Prostate gland (tissue), 2 donors: ENCODE measurements at regions of chr3 and their contacts with region 1.

Region 1: GRCh38 chr3:47522082-47522987 is 8.8 kb upstream of the ELP6 start:
- DNase-seq: peak; percentile 80
- H3K4me3 ChIP-seq: no peak overlapping the region
- H3K27ac ChIP-seq: no peak overlapping the region
- H3K4me1 ChIP-seq: no peaks in the 10 kb centered on the region
- H3K27me3 ChIP-seq: no peaks in the 10 kb centered on the region
- CTCF ChIP-seq: peak; percentile 81 to 97 (median 95)
- POLR2A ChIP-seq: no peak

Region 2: GRCh38 chr3:47057212-47057671 is 465.1 kb before region 1 on chr3:
- intact Hi-C with region 1: no loop called
- DNase-seq: no peak
- H3K4me3 ChIP-seq: no peak overlapping the region
- H3K27ac ChIP-seq: no peak overlapping the region
- H3K4me1 ChIP-seq: no peaks in the 10 kb centered on the region
- H3K27me3 ChIP-seq: no peaks in the 10 kb centered on the region
- CTCF ChIP-seq: no peak
- POLR2A ChIP-seq: no peak

Region 3: DNA sequence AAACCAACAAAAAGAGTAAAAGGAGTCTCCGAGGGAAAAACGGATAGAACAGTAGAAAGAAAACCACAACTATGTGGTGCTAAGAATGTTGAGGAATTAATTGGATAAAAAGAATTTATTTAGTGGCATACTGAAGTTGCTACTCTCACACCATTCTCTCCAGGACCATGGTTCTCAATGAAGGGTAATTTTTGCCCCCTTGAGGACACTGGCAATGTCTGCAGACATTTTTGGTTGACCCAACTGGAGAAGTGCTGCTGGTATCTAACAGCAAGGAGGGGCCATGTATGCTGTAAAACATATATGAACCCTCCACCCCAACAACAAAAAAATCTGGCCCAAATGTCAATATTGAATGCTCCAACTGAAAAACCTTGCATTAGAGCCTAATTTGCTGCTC is 142.2 kb after region 1 on chr3:
- intact Hi-C with region 1: loop called (anchors 10 kb)
- DNase-seq: no peak
- H3K4me3 ChIP-seq: no peak overlapping the region
- H3K27ac ChIP-seq: no peak overlapping the region
- H3K4me1 ChIP-seq: no peaks in the 10 kb centered on the region
- H3K27me3 ChIP-seq: no peaks in the 10 kb centered on the region
- CTCF ChIP-seq: no peak
- POLR2A ChIP-seq: no peak

Region 4: DNA sequence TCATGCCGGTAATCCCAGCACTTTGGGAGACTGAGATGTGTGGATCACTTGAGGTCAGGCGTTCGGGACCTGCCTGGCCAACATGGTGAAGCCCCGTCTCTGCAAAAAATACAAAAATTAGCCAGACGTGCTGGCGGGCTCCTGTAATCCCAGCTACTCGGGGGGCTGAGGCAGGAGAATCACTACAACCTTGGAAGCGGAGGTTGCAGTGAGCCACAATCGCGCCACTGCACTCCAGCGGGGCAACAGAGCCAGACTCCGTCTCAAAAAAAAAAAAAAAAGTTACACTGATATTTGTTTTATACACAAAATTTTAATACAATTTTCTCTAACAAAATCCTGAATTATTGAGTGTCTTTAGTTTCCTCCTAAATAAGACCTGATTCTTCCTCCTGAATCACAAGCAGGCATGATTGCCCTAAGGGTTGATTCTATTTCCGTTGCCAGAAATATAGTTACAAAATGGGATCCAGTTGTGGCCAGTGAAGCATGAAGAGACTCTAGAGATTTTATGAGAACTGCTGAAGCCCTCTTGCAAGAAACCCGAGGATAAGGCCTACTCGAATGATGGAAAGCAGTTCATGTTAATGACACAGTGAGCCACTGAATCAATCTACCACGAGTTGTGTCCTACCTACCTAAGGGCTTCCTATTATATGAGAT is 269.0 kb after region 1 on chr3:
- intact Hi-C with region 1: loop called (anchors 1 kb)
- DNase-seq: no peak
- H3K4me3 ChIP-seq: no peak overlapping the region
- H3K27ac ChIP-seq: no peak overlapping the region
- H3K4me1 ChIP-seq: no peaks in the 10 kb centered on the region
- H3K27me3 ChIP-seq: no peaks in the 10 kb centered on the region
- CTCF ChIP-seq: no peak
- POLR2A ChIP-seq: no peak

Region 5: DNA sequence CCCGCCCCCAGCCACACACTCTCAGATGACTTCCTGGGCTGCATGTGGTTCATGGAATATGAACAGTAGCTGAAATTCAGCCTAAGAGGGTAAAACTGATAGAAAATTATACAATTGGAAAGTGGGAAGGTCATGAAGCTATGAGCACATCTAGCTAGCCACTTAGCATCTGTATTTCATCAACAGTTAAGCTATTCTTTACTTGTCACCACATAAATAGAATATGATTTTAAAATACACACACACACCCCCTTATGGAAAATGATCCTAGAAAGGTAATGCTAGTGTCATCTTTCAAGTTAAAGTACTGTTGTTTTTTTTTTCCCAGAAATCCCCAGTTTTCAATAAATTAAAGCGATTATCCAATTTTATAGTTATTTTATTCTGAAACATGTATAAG is 490.3 kb after region 1 on chr3:
- intact Hi-C with region 1: no loop called
- DNase-seq: no peak
- H3K4me3 ChIP-seq: no peak overlapping the region
- H3K27ac ChIP-seq: no peak overlapping the region
- H3K4me1 ChIP-seq: peaks cover 6% of the 10 kb centered on the region
- H3K27me3 ChIP-seq: no peaks in the 10 kb centered on the region
- CTCF ChIP-seq: no peak
- POLR2A ChIP-seq: no peak